Calu3 (cell line): ENCODE measurements at regions of chrX and their contacts with region 1.

Region 1: DNA sequence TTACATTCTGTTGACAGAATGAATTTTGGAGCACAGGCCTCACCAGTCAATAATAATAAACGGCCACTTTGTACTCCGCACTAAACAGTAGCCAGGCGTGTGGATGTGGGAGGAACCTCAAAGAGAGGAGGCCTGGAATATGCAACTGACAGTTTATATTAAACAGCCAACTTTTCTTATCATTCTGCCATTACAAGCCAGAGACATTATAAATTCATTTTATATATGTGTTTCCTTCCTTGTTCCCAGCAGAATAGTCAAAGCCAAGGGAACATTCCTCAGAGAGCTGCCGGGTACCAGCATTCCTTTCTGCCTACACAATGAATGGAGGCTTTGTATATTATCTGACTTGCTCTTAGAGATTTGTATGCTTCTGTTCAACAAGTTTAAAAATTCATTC is 436.5 kb upstream of the FTHL17 start:
- DNase-seq: peak; percentile 47
- H3K4me3 Mint-ChIP-seq: peak overlapping the region; percentile 53
- H3K27ac Mint-ChIP-seq: peak overlapping the region; percentile 85
- H3K4me1 Mint-ChIP-seq: peaks cover 29% of the 10 kb centered on the region
- H3K27me3 Mint-ChIP-seq: no peaks in the 10 kb centered on the region
- CTCF ChIP-seq: no peak

Region 2: DNA sequence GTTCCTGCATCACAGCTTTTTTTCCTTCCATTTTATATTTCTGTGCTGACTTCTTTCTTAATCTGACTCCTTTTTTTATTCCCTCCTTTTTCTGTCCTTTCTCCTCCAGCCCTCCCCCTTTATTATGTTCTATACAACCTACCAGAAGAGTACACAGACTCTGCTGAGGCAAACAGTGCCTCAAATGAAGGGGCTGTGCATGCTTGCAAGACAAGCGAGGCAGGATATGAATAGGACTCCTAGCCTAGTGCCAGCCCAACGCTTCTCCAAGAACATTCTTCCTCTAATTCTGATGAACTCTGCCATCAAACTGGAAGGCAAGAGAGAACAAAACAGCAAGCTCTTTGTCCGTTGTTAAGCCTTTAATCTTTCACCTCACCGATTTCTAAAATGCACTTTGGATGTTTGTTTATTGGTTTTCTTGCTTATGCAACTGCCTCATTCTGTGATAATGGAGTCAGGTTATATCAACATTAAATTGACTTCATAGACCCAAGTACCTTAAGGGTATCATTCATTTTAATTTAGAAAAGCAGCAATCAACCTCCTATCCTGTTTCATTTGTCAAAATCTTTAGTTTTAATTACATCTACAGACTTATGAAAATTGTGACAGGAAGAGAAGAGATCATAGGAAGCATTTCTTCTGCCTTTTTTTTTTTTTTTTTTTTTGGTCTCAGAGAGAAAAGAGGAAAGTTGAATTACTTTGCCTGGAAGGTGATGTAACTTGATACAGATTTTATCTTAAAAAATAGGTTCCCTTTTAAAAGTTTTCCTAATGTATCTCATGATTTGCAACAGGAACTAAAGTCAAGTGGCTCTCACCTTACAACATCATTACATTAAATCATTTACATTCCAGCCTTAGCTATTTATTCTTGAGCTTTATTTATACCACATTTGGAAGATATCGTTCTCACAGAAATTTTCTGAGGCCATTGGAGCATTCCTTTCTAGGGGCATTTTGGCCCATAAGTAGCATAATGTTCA is 151.8 kb before region 1 on chrX:
- CTCF ChIA-PET with region 1: no interaction called
- intact Hi-C with region 1: no loop called
- DNase-seq: no peak
- H3K4me3 Mint-ChIP-seq: no peak overlapping the region
- H3K27ac Mint-ChIP-seq: no peak overlapping the region
- H3K4me1 Mint-ChIP-seq: peaks cover 32% of the 10 kb centered on the region
- H3K27me3 Mint-ChIP-seq: no peaks in the 10 kb centered on the region
- CTCF ChIP-seq: no peak

Region 3: GRCh38 chrX:31376408-31377022 is 131.8 kb before region 1 on chrX:
- CTCF ChIA-PET with region 1: no interaction called
- intact Hi-C with region 1: no loop called
- DNase-seq: no peak
- H3K4me3 Mint-ChIP-seq: peak overlapping the region; percentile 25
- H3K27ac Mint-ChIP-seq: peak overlapping the region; percentile 54
- H3K4me1 Mint-ChIP-seq: peaks cover 19% of the 10 kb centered on the region
- H3K27me3 Mint-ChIP-seq: no peaks in the 10 kb centered on the region
- CTCF ChIP-seq: no peak

Region 4: GRCh38 chrX:31609130-31609529 is 100.8 kb after region 1 on chrX:
- CTCF ChIA-PET with region 1: no interaction called
- intact Hi-C with region 1: loop called (anchors 5 kb)
- DNase-seq: no peak
- H3K4me3 Mint-ChIP-seq: no peak overlapping the region
- H3K27ac Mint-ChIP-seq: peak overlapping the region; percentile 74
- H3K4me1 Mint-ChIP-seq: peaks cover 12% of the 10 kb centered on the region
- H3K27me3 Mint-ChIP-seq: no peaks in the 10 kb centered on the region
- CTCF ChIP-seq: no peak

Region 5: DNA sequence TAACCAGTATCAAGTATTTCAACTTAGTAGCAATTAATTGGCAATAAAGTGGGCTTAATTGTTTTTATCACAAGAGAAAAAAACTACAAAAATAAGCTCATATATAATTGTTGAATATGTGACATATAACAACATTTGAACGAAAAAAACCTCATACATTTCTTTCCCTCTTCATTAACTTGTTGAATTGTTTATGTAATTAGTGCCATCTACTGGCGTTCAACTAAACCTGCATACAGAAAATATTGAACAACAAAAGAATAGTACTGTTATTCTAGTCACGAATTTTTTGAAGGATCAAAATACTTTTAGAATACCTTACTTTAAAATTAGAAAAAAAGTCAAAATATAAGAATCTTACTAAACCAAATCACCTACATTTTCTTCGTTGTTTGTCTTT is 150.0 kb after region 1 on chrX:
- CTCF ChIA-PET with region 1: no interaction called
- intact Hi-C with region 1: loop called (anchors 10 kb)
- DNase-seq: no peak
- H3K4me3 Mint-ChIP-seq: no peak overlapping the region
- H3K27ac Mint-ChIP-seq: no peak overlapping the region
- H3K4me1 Mint-ChIP-seq: peaks cover 7% of the 10 kb centered on the region
- H3K27me3 Mint-ChIP-seq: no peaks in the 10 kb centered on the region
- CTCF ChIP-seq: peak; percentile 17